ENCODE measurements at regions of chr6 and their contacts with region 1.

Region 1: GRCh38 chr6:151285122-151285521 is 45.4 kb downstream of the AKAP12 start:
- DNase-seq: no peak
- ATAC-seq: peak; percentile 12
- H3K4me3 Mint-ChIP-seq: no peak overlapping the region
- H3K27ac Mint-ChIP-seq: peak overlapping the region; percentile 82
- H3K4me1 Mint-ChIP-seq: peaks cover 40% of the 10 kb centered on the region
- H3K27me3 Mint-ChIP-seq: peaks cover 10% of the 10 kb centered on the region

Region 2: GRCh38 chr6:150987371-150987828 is 297.7 kb before region 1 on chr6:
- CTCF ChIA-PET with region 1: no interaction called
- POLR2A ChIA-PET with region 1: no interaction called
- intact Hi-C with region 1: loop called in 1 of 2 experiments (anchors 1 kb)
- DNase-seq: peak; percentile 75
- ATAC-seq: peak; percentile 95
- H3K4me3 Mint-ChIP-seq: peak overlapping the region; percentile 32
- H3K27ac Mint-ChIP-seq: peak overlapping the region; percentile 94
- H3K4me1 Mint-ChIP-seq: peaks cover 15% of the 10 kb centered on the region
- H3K27me3 Mint-ChIP-seq: no peaks in the 10 kb centered on the region

Region 3: DNA sequence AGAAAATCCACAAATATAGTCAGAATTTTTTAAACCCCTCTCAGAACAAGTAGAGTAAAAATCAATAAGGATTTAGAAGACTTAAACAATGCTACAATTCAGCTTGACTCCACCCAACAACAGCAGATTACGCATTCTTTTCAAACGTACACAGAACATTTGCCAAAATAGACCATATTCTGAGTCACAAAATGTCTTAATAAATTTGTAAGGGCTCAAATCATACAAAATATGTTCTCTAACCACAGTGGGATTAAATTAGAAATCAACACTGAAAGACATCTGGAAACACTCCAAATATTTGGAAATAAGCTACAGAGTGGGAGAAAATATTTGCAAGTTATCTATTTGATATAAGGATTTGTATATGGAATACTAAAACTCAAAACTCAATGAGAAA is 209.6 kb before region 1 on chr6:
- CTCF ChIA-PET with region 1: no interaction called
- POLR2A ChIA-PET with region 1: no interaction called
- intact Hi-C with region 1: no loop called
- DNase-seq: no peak
- ATAC-seq: no peak
- H3K4me3 Mint-ChIP-seq: no peak overlapping the region
- H3K27ac Mint-ChIP-seq: no peak overlapping the region
- H3K4me1 Mint-ChIP-seq: no peaks in the 10 kb centered on the region
- H3K27me3 Mint-ChIP-seq: no peaks in the 10 kb centered on the region

Region 4: DNA sequence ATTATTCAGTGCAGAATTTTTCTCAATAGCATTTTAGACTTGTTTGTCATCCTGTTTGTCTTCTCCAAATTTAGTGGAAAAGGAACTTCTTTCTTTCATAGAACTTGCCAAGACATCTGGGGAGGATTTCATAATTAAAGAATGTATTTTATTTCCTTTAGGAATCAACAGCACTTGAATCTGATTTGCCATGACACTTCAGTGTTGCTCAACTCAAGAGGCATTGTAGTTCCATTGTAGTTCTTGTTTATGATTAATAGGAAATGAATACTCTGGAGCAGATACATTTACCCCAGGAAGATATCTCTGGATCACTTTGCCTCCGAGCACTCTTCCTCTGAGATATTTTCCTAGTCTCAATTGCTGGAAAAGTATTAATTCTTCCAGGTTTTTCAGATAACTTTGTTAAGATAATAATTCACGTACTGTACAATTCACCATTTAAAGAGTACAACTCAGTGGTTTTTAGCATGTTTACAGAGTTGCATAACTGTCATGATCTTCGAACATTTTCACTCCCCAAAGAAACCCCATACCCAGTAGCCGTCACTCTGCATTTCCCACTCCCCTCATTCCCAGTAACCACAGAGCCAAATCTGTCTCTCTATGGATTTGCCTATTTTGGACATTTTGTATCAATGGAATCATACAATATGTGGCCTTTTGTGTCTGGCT is 15.7 kb before region 1 on chr6:
- CTCF ChIA-PET with region 1: no interaction called
- POLR2A ChIA-PET with region 1: no interaction called
- intact Hi-C with region 1: no loop called
- DNase-seq: no peak
- ATAC-seq: no peak
- H3K4me3 Mint-ChIP-seq: no peak overlapping the region
- H3K27ac Mint-ChIP-seq: no peak overlapping the region
- H3K4me1 Mint-ChIP-seq: no peaks in the 10 kb centered on the region
- H3K27me3 Mint-ChIP-seq: peaks cover 23% of the 10 kb centered on the region

Region 5: DNA sequence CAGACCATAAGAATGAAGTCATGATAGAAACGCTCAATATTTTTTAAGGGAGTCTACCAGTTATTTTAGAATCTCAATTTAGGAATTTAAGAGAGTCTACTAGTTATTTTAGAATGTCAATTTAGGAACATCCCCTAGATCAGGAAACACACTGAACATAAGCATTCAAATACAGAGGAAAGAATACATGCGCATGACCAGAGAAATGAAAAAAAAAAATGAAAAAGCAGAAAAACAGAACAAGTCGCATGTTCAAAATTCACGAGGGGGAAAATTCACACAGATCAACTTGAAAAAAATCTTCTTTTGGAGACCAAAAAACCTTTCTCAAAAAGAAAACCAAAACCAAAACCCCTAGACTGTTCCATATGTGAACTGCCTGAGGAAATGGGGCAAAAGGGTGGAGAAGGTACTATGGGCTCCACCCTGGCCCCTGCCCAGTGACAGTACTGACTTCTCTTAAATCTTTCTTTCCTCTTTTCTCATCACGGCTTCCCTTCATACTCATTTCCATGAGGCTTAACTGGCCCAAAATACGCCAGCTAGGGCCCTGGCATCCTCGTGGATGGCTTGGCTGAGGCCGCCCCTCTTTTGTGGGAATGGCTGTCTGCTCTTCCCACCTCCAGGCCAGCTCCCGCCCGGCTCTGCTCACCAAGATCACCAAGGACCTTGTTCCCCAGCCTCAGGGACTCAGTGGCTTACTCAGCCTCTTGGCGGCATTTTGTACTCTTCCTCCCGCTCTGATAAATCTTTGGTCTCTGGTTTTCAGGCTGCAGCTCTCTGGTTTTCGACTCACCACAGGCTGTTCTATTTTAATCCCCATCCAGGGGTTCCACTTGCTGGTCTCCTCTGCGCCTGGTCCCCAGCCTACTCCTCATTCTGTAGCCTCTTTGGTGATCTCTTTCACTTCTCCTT is 95.1 kb after region 1 on chr6:
- CTCF ChIA-PET with region 1: no interaction called
- POLR2A ChIA-PET with region 1: no interaction called
- intact Hi-C with region 1: loop called in 1 of 2 experiments (anchors 5 kb)
- DNase-seq: peak; percentile 39
- ATAC-seq: peak; percentile 71
- H3K4me3 Mint-ChIP-seq: peak overlapping the region; percentile 77
- H3K27ac Mint-ChIP-seq: peak overlapping the region; percentile 99
- H3K4me1 Mint-ChIP-seq: peaks cover 65% of the 10 kb centered on the region
- H3K27me3 Mint-ChIP-seq: no peaks in the 10 kb centered on the region

Region 6: DNA sequence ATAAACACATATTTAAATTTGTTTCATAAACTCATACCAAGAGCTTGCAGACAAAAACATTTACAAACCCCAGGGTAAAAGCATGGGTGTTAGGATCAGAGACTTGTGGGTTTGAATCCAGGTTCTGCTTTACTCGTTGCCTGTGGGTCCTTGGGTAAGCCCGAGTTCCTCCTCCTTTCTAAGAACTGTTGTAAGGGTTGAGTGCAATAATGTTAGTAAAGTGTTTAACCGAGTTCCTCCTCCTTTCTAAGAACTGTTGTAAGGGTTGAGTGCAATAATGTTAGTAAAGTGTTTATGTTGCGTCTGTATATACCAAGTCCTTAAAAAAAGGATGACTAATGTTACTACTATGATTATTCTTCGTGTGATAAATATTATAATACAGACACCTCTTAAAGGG is 227.4 kb after region 1 on chr6:
- CTCF ChIA-PET with region 1: no interaction called
- POLR2A ChIA-PET with region 1: no interaction called
- intact Hi-C with region 1: no loop called
- DNase-seq: no peak
- ATAC-seq: no peak
- H3K4me3 Mint-ChIP-seq: no peak overlapping the region
- H3K27ac Mint-ChIP-seq: no peak overlapping the region
- H3K4me1 Mint-ChIP-seq: peaks cover 2% of the 10 kb centered on the region
- H3K27me3 Mint-ChIP-seq: peaks cover 3% of the 10 kb centered on the region

Measured in activated CD4-positive, alpha-beta T cell treated with anti-CD3 and anti-CD28 coated beads for 36 hours (primary cell).